IMR-90 (cell line): ENCODE measurements at regions of chr20 and their contacts with region 1.

Region 1: DNA sequence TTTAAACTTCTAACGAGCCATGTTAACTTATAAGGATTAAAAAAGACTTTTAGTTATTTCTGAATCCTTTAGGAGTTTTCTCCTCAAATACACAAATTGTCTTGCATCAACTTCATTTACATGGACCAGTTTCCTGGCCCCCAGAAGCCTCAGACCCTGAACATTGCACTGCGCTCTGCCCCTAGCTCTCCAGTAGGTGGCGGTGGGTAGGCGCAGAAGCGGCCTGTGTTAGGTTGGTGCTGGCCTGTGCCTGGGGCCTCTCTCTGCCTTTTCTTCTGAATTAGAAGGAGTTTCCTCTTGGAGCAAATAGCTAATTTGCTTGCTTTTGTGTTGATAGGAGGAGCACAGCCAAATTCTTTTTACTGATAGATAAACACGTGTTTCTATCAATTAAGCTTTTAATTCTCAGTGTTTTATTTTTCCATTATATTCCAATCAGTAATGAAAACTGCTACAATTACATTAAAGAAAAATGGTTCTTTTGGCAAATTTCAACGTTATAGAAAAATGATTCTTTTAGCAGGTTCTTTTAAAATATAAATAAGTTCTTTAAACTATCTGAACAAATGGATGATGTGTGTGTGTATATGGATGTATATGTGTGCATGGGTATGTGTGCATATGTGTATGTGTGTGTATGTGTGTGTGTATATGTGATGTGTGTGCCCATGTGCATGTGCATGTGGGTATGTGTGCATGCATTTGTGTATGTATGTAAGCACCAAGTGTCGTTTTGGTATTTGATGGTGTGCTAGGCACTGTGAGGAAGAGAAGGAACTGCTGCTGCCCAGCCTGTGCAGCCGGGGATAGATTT is 44.5 kb downstream of the DTD1 start:
- DNase-seq: peak; percentile 59
- ATAC-seq: peak; percentile 100
- H3K4me3 ChIP-seq: no peak overlapping the region
- H3K27ac ChIP-seq: no peak overlapping the region
- H3K4me1 ChIP-seq: no peaks in the 10 kb centered on the region
- H3K27me3 ChIP-seq: no peaks in the 10 kb centered on the region
- CTCF ChIP-seq: peak; percentile 94
- POLR2A ChIP-seq: no peak
- RAD21 ChIP-seq: peak; percentile 96

Region 2: GRCh38 chr20:18412221-18412901 is 220.0 kb before region 1 on chr20:
- CTCF ChIA-PET with region 1: no interaction called
- POLR2A ChIA-PET with region 1: no interaction called
- dilution Hi-C with region 1: no loop called
- in situ Hi-C with region 1: no loop called
- intact Hi-C with region 1: loop called (anchors 10 kb)
- DNase-seq: no peak
- ATAC-seq: no peak
- H3K4me3 ChIP-seq: no peak overlapping the region
- H3K27ac ChIP-seq: no peak overlapping the region
- H3K4me1 ChIP-seq: no peaks in the 10 kb centered on the region
- H3K27me3 ChIP-seq: no peaks in the 10 kb centered on the region
- CTCF ChIP-seq: no peak
- POLR2A ChIP-seq: no peak
- RAD21 ChIP-seq: no peak

Region 3: GRCh38 chr20:18524646-18525045 is 107.8 kb before region 1 on chr20:
- CTCF ChIA-PET with region 1: no interaction called
- POLR2A ChIA-PET with region 1: no interaction called
- dilution Hi-C with region 1: no loop called
- in situ Hi-C with region 1: loop called (anchors 25 kb)
- intact Hi-C with region 1: no loop called
- DNase-seq: peak; percentile 68
- ATAC-seq: peak; percentile 59
- H3K4me3 ChIP-seq: no peak overlapping the region
- H3K27ac ChIP-seq: no peak overlapping the region
- H3K4me1 ChIP-seq: peaks cover 2% of the 10 kb centered on the region
- H3K27me3 ChIP-seq: no peaks in the 10 kb centered on the region
- CTCF ChIP-seq: no peak
- POLR2A ChIP-seq: no peak
- RAD21 ChIP-seq: no peak

Region 4: DNA sequence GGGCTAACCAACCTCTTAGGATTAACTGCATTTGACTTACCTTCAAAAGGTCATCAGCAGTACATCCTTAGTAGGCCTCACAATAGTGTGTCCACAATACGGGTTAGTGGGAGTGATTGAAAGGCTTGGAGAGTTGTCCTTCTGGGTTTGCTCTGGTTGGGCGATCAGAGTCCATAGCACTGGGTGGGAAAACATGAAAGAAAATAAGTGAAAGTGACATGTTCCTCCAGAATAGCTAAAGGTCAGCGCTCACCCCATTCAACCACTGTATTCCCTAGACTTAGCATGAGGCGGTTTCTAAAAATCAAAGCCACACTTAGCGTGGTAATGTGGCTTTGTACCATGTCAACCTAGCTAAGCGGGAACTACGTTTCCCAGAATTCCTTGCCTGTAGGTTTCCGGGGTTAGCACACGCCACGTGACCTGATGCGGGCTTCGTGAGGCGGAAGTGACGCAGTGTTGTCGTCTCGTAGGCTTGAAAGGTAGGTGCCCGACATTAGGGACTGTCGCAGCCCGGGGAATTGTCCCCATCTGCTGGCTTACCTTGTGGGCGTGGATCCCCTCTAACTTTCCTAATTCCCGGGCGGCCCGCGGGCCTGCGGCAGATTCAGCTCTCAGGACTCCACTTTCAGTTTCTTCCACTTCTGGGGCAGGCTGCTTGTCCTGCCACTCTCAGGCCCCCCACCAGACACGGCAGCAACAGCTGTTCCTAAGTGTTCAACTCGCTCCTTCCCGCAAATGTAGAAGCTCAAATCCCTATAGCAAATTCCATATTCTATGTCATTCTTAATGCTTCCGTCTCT is 161.4 kb after region 1 on chr20:
- CTCF ChIA-PET with region 1: no interaction called
- POLR2A ChIA-PET with region 1: no interaction called
- dilution Hi-C with region 1: no loop called
- in situ Hi-C with region 1: no loop called
- intact Hi-C with region 1: loop called (anchors 1 kb)
- DNase-seq: peak; percentile 87
- ATAC-seq: peak; percentile 96
- H3K4me3 ChIP-seq: peak overlapping the region; percentile 59
- H3K27ac ChIP-seq: peak overlapping the region; percentile 42
- H3K4me1 ChIP-seq: no peaks in the 10 kb centered on the region
- H3K27me3 ChIP-seq: no peaks in the 10 kb centered on the region; the same call in 1 of the 2 replicates
- CTCF ChIP-seq: no peak
- POLR2A ChIP-seq: peak; percentile 74; the same call in 1 of the 2 replicates
- RAD21 ChIP-seq: peak; percentile 14; the same call in 1 of the 2 replicates

Region 5: DNA sequence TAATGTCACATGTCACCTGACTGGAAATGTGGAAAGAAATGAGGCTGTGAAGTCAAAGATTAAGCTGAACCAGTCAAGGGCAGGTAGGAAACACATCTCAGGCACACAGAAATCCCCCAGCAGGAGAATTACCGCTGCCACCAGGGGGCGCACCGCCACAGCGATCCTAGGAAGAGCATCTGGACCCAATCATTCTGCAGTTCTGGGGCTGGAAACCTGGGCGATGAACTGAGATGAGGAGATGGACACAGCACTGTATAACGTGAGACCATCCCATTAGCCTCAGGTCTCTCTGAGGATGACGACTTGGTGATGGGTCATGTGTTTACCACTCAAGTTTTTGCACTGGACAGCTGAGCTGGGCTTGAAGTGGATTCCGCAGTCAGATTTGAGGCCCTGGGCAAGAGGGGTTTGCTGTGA is 573.6 kb after region 1 on chr20:
- CTCF ChIA-PET with region 1: no interaction called
- POLR2A ChIA-PET with region 1: no interaction called
- dilution Hi-C with region 1: no loop called
- in situ Hi-C with region 1: loop called (anchors 10 kb)
- intact Hi-C with region 1: loop called (anchors 5 kb)
- DNase-seq: peak; percentile 10
- ATAC-seq: peak; percentile 42
- H3K4me3 ChIP-seq: no peak overlapping the region
- H3K27ac ChIP-seq: no peak overlapping the region
- H3K4me1 ChIP-seq: no peaks in the 10 kb centered on the region
- H3K27me3 ChIP-seq: peaks cover 4% of the 10 kb centered on the region; the same call in 1 of the 2 replicates
- CTCF ChIP-seq: peak; percentile 69
- POLR2A ChIP-seq: no peak
- RAD21 ChIP-seq: peak; percentile 57

Region 6: GRCh38 chr20:19583532-19584175 is 951.3 kb after region 1 on chr20:
- CTCF ChIA-PET with region 1: no interaction called
- POLR2A ChIA-PET with region 1: no interaction called
- dilution Hi-C with region 1: no loop called
- in situ Hi-C with region 1: no loop called
- intact Hi-C with region 1: loop called (anchors 10 kb)
- DNase-seq: peak; percentile 5
- ATAC-seq: peak; percentile 75
- H3K4me3 ChIP-seq: no peak overlapping the region
- H3K27ac ChIP-seq: no peak overlapping the region
- H3K4me1 ChIP-seq: no peaks in the 10 kb centered on the region
- H3K27me3 ChIP-seq: peaks cover 3% of the 10 kb centered on the region
- CTCF ChIP-seq: peak; percentile 53
- POLR2A ChIP-seq: no peak
- RAD21 ChIP-seq: peak; percentile 64

Region 7: DNA sequence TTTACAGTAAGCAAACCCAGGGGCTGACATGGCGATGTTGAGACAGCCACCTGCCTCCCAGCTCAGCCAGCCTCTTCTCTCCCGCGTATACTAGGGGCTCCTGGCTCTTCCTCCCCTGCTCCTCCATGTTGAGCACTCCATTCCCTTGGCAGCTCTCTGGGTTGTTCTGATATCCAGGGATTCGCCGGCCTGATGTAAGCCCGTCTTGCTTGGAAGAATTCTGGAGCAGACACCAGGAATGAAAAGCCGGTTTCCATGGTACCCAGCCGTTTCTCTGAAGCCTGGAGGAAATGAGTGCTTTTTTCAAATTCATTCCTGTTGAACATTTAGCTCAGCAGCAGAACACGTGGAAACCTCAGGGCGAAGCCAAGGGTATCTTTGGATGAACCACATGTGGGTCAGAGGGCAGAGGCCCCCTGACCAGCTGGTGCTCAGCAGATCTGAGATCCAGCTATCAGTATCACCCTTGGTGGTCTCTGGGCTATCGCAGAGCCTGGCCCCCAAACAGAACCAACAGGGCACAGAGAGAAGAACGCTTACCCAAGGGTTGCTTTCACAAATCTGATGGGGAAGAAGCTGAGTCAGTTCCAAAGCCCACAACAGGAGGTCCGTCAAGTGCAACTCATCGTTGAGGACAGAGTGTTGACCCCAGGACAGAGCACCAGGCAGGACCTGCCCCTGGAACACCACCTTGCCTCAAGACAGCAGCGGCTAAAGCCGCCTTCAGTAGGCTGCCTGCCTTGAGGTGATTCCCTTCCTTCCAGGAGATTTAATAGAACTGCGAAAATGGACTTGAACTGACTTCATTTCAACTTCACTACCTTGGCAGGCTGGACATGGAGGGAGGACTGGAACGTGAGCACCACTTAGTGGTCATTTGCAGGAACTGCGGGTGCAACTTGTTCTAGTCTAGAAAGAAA is 1029.6 kb after region 1 on chr20:
- CTCF ChIA-PET with region 1: no interaction called
- POLR2A ChIA-PET with region 1: no interaction called
- dilution Hi-C with region 1: no loop called
- in situ Hi-C with region 1: loop called (anchors 10 kb)
- intact Hi-C with region 1: loop called (anchors 1 kb)
- DNase-seq: peak; percentile 71
- ATAC-seq: peak; percentile 97
- H3K4me3 ChIP-seq: no peak overlapping the region
- H3K27ac ChIP-seq: no peak overlapping the region
- H3K4me1 ChIP-seq: no peaks in the 10 kb centered on the region
- H3K27me3 ChIP-seq: peaks cover 41% of the 10 kb centered on the region
- CTCF ChIP-seq: peak; percentile 97
- POLR2A ChIP-seq: no peak
- RAD21 ChIP-seq: peak; percentile 97